AG04449 (cell line): ENCODE measurements at regions of chr11 and their contacts with region 1.

Region 1: DNA sequence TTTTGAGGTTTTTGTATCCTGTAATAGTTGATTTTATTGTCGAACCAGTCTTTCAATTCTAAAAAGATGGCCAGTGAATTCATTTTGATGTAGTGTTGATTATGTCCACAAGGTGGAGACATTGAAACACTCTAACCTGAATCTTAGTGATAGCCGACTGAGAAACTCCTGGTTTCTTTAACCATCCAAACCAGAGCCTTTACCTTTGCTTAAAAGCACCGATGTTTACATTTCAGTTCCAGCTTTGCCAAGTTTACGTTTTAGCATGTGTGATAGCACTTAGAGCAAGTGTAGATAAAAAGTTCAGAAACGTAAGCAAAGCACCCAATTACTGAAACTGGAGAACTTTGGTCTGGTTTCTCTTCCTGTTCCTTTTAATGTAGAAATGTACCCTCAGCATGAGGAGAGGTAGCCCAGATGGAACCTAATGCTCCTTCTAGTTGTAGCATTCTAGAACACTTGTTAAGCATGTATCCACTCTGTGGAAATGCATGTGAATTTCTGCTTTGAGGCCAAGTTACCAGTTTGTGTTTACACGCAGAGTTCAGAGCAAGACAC is 208.6 kb downstream of the DBX1 start:
- DNase-seq: no peak
- H3K4me3 ChIP-seq: no peak overlapping the region
- CTCF ChIP-seq: peak; percentile 30

Region 2: GRCh38 chr11:19931141-19931770 is 20.4 kb before region 1 on chr11:
- CTCF ChIA-PET with region 1: interaction called, 119 read pairs
- POLR2A ChIA-PET with region 1: no interaction called
- DNase-seq: no peak
- H3K4me3 ChIP-seq: peak overlapping the region; percentile 54
- CTCF ChIP-seq: no peak

Region 3: DNA sequence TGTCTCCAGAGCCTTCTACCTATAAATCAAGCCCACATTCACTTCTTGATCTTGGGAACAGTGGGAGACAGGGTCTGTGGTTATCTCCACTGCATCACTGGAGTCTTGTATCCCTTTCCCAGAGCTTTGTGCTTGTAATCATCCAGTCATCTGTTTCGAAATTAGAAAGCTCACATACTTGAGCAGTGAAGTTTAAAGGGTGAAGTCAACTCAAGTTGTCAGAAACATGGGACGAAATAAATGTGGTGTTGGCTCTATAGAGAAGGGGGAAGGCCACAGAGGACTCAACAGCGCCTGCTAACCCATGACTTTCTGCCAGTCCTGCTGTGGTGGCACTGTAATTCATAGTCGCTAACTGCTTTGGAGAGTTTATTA is 11.2 kb after region 1 on chr11:
- CTCF ChIA-PET with region 1: interaction called, 68 read pairs
- POLR2A ChIA-PET with region 1: no interaction called
- DNase-seq: peak; percentile 96
- H3K4me3 ChIP-seq: no peak overlapping the region
- CTCF ChIP-seq: no peak

Region 4: GRCh38 chr11:19995131-19995530 is 43.5 kb after region 1 on chr11:
- CTCF ChIA-PET with region 1: interaction called, 15 read pairs
- POLR2A ChIA-PET with region 1: no interaction called
- DNase-seq: peak; percentile 77
- H3K4me3 ChIP-seq: no peak overlapping the region
- CTCF ChIP-seq: no peak

Region 5: GRCh38 chr11:20110908-20111669 is 159.5 kb after region 1 on chr11:
- CTCF ChIA-PET with region 1: interaction called, 87 read pairs
- POLR2A ChIA-PET with region 1: interaction called, 5 read pairs
- DNase-seq: peak; percentile 83
- H3K4me3 ChIP-seq: no peak overlapping the region
- CTCF ChIP-seq: peak; percentile 85